H1 (cell line): ENCODE measurements at regions of chr10 and their contacts with region 1.

Region 1: GRCh38 chr10:110151467-110151866 is 55.9 kb upstream of the MXI1 start:
- DNase-seq: peak in 1 of 2 experiments; percentile 43
- H3K4me3 ChIP-seq: no peak overlapping the region
- H3K27ac ChIP-seq: no peak overlapping the region
- H3K4me1 ChIP-seq: no peaks in the 10 kb centered on the region; a peak in 3 of 7 replicates
- H3K27me3 ChIP-seq: no peaks in the 10 kb centered on the region; a peak in 2 of 7 replicates
- CTCF ChIP-seq: no peak
- EP300 ChIP-seq: no peak
- POLR2A ChIP-seq: no peak
- RAD21 ChIP-seq: no peak

Region 2: DNA sequence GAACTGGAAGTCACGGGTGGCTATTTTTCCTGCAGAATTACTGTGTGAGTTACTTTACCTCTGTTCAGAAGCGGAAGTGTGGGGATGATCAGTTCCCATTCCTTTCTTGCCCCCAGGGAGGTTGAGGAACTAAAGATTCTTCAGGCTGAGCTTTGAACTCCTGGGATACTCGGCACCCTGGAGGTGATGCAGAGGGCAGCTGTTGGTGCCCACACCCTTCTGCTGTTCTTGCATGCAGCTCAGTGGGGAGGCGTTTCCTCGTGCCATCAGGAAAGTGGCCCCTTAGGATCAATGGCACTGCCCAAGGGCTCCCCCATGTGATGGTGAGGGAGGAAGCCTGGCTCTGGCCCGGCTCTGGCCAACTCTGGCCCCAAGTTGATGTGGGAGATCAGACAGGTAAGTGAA is 11.3 kb after region 1 on chr10:
- CTCF ChIA-PET with region 1: interaction called, 13 read pairs
- POLR2A ChIA-PET with region 1: interaction called, 5 read pairs
- DNase-seq: peak in 1 of 2 experiments; percentile 69
- H3K4me3 ChIP-seq: no peak overlapping the region
- H3K27ac ChIP-seq: no peak overlapping the region
- H3K4me1 ChIP-seq: peaks cover 2 to 8% (median 5%) of the 10 kb centered on the region in 4 experiments
- H3K27me3 ChIP-seq: peaks cover 31 to 71% (median 51%) of the 10 kb centered on the region in 4 experiments
- CTCF ChIP-seq: peak; percentile 20 to 37 (median 33)
- EP300 ChIP-seq: no peak
- POLR2A ChIP-seq: no peak
- RAD21 ChIP-seq: peak; percentile 44 to 60; a peak in 3 of 4 replicates

Region 3: DNA sequence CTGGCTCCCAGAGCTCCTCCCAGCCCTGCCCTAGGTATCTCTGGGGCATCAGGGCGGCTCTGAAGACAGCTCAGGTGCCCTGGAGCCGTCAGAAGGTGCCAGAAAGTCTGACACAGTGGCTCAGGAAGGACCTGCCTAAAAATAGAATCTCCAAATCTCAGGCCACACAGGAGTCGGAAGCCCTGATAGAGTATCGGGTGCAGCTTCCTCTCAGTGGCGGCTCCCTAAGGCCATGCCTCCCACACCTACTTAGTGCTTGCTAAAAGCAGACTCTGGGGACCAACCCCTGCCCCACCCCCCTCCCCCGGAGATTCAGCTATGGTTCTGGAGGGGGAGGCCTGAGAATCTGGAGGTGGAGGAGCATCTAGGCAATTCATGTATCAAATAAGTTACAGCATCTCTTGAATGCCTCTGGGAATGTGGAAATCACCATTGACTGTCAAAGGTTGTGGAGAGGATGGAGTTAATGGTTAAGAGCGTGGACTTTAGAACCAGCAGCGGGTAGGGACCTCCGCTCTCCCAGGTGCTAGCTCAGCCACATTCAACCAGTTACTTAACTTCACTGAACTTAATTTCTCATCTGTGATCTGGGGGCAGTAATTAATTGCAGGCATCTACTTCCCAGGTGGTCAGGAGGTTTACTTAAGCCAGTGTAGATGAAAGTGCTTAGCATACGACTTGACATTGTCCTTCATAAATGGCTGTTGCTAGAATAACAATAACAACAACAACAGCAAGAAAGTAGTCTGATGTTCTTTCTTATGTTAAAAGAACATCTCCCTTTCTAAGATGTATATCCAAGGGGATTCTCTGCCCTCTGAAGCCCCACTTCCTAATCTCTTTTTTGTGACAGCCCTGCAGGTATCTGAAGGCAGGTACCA is 17.4 kb after region 1 on chr10:
- CTCF ChIA-PET with region 1: interaction called, 13 read pairs
- POLR2A ChIA-PET with region 1: interaction called, 5 read pairs
- DNase-seq: peak; percentile 47 to 51
- H3K4me3 ChIP-seq: no peak overlapping the region
- H3K27ac ChIP-seq: no peak overlapping the region
- H3K4me1 ChIP-seq: peaks cover 0 to 21% (median 8%) of the 10 kb centered on the region in 4 experiments; a peak in 6 of 7 replicates
- H3K27me3 ChIP-seq: peaks cover 69 to 99% (median 94%) of the 10 kb centered on the region in 4 experiments
- CTCF ChIP-seq: no peak
- EP300 ChIP-seq: peak in 1 of 2 experiments; percentile 87; a peak in 1 of 3 replicates
- POLR2A ChIP-seq: no peak
- RAD21 ChIP-seq: no peak

Region 4: GRCh38 chr10:110233846-110234245 is 82.4 kb after region 1 on chr10:
- CTCF ChIA-PET with region 1: no interaction called
- POLR2A ChIA-PET with region 1: no interaction called
- DNase-seq: no peak
- H3K4me3 ChIP-seq: no peak overlapping the region
- H3K27ac ChIP-seq: no peak overlapping the region
- H3K4me1 ChIP-seq: no peaks in the 10 kb centered on the region
- H3K27me3 ChIP-seq: peaks cover 0 to 1% (median 0%) of the 10 kb centered on the region in 4 experiments; a peak in 1 of 7 replicates
- CTCF ChIP-seq: no peak
- EP300 ChIP-seq: no peak
- POLR2A ChIP-seq: no peak
- RAD21 ChIP-seq: no peak